ENCODE measurements at regions of chr16 and their contacts with region 1.

Region 1: GRCh38 chr16:84970447-84971127 is 40.7 kb downstream of the ZDHHC7 start:
- DNase-seq: peak; percentile 92
- H3K4me3 Mint-ChIP-seq: no peak overlapping the region
- H3K27ac Mint-ChIP-seq: no peak overlapping the region
- H3K4me1 Mint-ChIP-seq: peaks cover 2% of the 10 kb centered on the region
- H3K27me3 Mint-ChIP-seq: no peaks in the 10 kb centered on the region

Region 2: GRCh38 chr16:84754353-84754856 is 216.2 kb before region 1 on chr16:
- intact Hi-C with region 1: loop called (anchors 5 kb)
- DNase-seq: peak; percentile 94
- H3K4me3 Mint-ChIP-seq: peak overlapping the region; percentile 66
- H3K27ac Mint-ChIP-seq: no peak overlapping the region
- H3K4me1 Mint-ChIP-seq: peaks cover 66% of the 10 kb centered on the region
- H3K27me3 Mint-ChIP-seq: no peaks in the 10 kb centered on the region

Region 3: DNA sequence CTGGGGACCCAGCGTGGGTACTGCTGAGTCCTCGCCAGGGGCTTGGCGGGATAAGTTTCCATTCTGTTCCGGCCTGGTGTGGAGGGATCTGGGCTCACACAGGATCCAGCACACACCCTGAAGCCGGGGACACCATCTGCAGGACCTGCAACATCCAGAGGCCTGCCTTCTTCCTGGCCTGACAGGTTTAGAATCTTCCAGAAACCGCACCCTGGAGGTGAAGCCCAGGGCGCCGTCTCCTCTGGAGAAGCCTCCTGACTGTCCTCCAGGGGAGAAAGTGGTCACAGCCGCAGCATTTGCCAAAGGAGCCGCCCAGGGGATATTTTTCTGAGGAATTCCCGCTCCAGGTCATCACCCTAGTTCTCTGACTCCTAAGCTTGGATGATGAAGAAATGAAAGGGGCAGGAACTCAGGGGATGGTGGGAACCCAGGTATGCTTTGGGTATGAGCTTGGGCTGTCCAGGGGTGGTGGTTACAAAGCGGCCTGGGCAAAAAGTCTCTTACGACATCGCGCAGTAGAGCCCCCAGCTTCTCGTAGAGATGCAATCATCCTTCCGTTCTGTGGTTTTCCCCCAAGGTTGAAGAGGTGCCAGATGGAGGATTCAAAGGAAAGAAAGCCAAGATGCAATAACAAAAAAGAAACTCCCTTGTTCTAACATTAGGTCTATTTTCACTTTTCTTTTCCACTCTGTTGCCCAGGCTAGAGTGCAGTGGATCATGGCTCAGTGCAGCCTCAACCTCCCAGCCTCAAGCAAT is 159.9 kb before region 1 on chr16:
- intact Hi-C with region 1: no loop called
- DNase-seq: peak; percentile 86
- H3K4me3 Mint-ChIP-seq: peak overlapping the region; percentile 50
- H3K27ac Mint-ChIP-seq: peak overlapping the region; percentile 26
- H3K4me1 Mint-ChIP-seq: peaks cover 28% of the 10 kb centered on the region
- H3K27me3 Mint-ChIP-seq: peaks cover 6% of the 10 kb centered on the region

Region 4: DNA sequence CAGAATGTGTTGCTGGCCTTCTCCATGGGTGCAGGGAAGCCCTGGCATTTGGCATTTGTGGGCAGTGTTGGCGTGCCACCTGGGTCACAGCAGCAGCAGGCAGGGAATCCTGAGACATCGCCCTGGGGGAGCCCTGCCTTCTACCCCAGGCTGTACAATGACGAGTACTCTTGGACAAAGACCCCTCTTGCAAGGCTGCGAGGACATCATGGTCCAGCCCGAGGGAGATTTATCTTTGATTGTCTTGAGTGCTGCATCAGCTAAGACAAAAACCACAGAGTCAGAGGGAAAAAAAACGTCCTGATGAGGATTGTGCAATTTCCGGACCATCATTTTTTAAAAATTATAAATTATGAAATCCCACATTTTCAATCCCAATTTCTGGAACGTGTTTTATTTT is 147.1 kb before region 1 on chr16:
- intact Hi-C with region 1: no loop called
- DNase-seq: no peak
- H3K4me3 Mint-ChIP-seq: no peak overlapping the region
- H3K27ac Mint-ChIP-seq: no peak overlapping the region
- H3K4me1 Mint-ChIP-seq: peaks cover 6% of the 10 kb centered on the region
- H3K27me3 Mint-ChIP-seq: peaks cover 43% of the 10 kb centered on the region

Region 5: DNA sequence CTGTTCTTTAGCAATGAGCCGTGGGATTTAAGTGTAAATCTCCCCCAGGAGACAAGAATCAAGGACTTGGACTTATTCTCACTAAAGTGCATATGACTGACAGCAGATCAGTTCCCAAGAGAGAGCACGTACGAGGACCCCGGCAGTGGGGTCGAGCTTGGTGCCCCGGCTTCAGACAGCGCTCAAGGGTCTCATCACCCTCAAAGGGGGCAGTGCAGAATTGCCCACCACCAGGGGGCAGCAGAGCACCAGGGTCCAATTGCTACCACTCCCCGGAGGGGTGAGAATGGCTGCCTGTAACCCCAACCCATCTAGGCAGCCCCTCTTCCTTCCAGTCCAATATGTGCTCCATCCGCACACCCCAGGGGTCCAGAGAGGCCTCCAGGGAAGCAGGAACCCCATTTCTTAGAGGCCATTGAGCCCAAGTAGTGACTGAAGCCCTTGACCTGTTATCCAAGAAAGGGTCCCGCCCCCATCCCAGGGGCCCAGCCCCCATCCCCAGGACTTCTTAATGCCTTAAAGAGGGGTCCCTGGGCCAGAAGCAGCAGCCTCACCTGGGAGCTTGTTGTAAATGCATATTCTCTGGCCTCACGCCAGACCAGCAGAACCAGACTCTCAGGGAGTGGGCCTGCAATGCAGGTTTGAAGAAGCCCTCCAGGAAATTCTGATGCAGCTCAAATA is 45.4 kb before region 1 on chr16:
- intact Hi-C with region 1: loop called (anchors 1 kb)
- DNase-seq: peak; percentile 89
- H3K4me3 Mint-ChIP-seq: no peak overlapping the region
- H3K27ac Mint-ChIP-seq: no peak overlapping the region
- H3K4me1 Mint-ChIP-seq: no peaks in the 10 kb centered on the region
- H3K27me3 Mint-ChIP-seq: no peaks in the 10 kb centered on the region

Region 6: DNA sequence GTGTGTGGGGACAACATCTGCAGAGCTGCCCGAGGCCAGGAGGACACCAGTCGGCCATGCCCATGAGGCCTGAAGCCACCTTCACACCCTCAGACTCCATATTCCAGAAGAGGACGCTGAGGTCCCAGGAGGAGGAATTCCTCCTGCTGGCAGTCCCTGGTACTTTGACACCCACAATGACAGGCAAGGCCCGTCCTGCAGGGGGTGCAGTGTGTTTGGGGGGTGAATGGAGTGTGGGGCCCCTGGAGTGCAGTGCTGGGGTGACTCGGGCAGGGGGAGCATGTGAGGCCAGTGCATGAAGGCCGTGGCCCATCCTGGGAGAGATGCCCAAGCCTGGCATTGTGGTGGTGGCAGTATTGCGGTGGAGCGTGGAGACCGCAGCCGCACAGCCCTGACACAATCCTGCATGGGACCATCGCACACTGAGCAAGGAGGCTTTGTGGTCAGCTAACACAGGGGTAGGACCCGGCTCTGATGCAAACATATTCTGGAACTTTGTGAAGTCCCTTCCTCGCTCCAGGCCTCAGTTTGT is 11.5 kb before region 1 on chr16:
- intact Hi-C with region 1: no loop called
- DNase-seq: no peak
- H3K4me3 Mint-ChIP-seq: no peak overlapping the region
- H3K27ac Mint-ChIP-seq: no peak overlapping the region
- H3K4me1 Mint-ChIP-seq: no peaks in the 10 kb centered on the region
- H3K27me3 Mint-ChIP-seq: peaks cover 5% of the 10 kb centered on the region

Region 7: DNA sequence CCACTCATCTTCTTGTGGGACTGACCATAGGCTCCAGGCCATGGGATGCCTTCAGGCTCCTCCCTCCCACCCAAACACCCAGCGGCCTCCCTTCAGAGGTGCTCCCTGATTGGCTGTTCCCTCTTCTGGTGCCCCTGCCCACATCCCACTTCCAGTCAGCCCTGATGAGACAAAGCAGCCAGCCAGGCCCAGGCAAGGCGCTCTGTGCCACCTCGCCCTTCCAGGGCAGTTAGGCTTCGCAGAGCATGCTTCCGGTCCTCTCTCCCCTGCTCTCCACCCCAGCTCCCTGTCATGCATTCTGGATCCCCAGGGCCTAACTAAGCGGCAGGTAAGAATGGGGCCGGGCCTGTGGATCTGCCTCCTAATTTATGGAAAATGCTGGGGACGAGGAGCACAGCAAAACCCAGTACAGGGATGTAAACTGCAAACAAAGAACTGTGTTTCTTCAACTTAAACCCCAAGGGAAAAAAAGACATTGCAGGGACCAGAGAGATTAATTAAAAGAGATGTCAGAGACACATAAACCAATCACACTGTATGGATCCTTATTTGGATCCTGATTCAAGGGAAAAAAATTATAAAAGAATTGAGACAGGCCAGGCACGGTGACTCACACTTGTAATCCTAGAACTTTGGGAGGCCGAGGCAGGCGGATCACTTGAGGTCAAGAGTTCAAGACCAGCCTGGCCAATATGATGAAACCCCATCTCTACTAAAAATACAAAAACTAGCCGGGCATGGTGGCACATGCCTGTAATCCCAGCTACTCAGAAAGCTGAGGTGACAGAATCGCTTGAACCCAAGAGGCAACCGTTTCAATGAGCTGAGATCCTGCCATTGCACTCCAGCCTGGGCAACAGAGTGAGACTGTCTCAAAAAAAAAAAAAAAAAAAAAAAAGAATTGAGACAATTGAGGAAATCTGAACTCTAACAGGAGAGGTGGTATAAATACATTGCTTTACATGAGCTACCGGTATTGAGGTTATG is 14.8 kb after region 1 on chr16:
- intact Hi-C with region 1: no loop called
- DNase-seq: no peak
- H3K4me3 Mint-ChIP-seq: no peak overlapping the region
- H3K27ac Mint-ChIP-seq: peak overlapping the region; percentile 21
- H3K4me1 Mint-ChIP-seq: peaks cover 4% of the 10 kb centered on the region
- H3K27me3 Mint-ChIP-seq: no peaks in the 10 kb centered on the region